ENCODE measurements at regions of chr2 and their contacts with region 1.

Region 1: DNA sequence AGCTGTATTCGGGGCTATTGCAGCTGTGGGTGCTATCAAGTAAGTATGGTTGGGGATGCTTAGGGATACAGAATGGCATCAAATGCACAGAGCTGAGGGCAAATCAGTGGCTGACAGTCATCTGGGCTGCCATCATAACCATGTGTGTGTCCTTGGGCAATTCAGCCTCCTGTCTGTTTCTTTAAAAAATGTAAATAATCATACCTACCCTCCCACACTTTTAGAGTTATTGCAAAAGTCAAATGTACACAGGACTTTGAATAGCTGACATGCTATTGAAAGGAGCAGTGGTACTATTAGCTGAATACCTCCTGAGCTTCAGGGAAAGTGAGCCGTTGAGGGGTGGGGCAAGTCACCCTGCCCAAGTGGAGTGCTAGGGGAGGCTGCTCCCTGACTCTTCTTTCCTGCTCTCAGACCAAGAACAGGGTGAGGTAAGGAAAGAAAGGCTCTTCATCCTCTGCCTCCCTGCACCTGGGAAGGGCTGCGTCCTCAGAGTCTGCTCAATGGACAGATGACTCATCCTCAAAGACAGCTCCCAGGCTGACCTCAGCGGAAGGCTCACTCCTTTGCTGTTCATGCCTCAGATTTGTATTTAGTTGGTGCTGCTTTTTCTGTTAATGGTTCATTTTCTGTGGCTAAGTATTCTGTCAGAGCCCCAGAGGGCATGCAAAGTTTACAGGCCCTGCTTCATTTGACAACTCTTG is 54.9 kb upstream of the BZW1 start:
- DNase-seq: no peak

Region 2: GRCh38 chr2:200693836-200694470 is 62.8 kb before region 1 on chr2:
- intact Hi-C with region 1: loop called in 1 of 2 experiments (anchors 2 kb)
- DNase-seq: no peak

Region 3: DNA sequence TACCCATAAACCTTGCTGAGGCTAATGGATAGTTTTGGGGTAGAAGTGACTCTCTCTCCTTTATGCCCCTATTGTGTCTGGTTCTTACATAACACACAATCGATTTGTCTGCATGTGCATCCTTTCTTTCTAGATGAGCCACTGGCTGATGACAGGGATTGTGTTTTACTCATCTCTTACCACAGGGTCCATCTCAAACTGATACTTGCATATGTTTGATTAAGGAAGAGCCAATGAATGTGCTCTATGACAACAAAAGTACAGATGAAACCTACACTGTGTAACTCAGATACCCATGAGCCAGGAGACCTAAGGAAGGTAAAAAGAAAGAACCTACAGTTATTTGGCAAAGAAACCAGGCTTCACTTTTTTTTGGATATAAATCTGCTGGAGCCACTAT is 41.7 kb after region 1 on chr2:
- intact Hi-C with region 1: loop called in 1 of 2 experiments (anchors 1 kb)
- DNase-seq: no peak